CD4-positive, alpha-beta T cell (primary cell): ENCODE measurements at regions of chr6 and their contacts with region 1.

Region 1: DNA sequence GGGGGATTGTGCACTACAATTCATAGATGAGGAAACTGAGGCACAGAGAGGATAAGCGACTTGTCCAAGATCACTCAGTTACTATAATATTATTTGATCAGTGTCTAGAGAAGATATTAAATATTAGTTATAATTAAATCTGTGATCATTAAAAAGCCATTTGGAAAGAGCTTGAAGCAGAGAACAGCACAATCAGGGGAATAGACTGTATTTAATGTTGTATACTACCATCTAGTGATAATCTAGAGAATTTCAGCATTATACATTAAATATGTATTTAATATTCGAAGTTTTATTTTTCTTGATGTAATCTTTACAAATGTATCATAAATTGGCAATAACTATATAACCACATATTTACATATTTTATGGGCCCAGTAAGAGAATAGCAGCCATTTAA is 20.1 kb upstream of the MTCL3 start:
- DNase-seq: peak in 3 of 14 experiments; percentile 25 to 31 (median 28)
- ATAC-seq: peak; percentile 55
- H3K4me3 ChIP-seq: no peak overlapping the region
- H3K4me3 Mint-ChIP-seq: no peak overlapping the region
- H3K27ac ChIP-seq: no peak overlapping the region
- H3K27ac Mint-ChIP-seq: no peak overlapping the region
- H3K4me1 ChIP-seq: no peaks in the 10 kb centered on the region
- H3K4me1 Mint-ChIP-seq: no peaks in the 10 kb centered on the region
- H3K27me3 ChIP-seq: peaks cover 0 to 13% of the 10 kb centered on the region in 2 experiments
- H3K27me3 Mint-ChIP-seq: peaks cover 10% of the 10 kb centered on the region
- CTCF ChIP-seq: peak; percentile 67

Region 2: GRCh38 chr6:125995972-125996580 is 1543.2 kb before region 1 on chr6:
- CTCF ChIA-PET with region 1: no interaction called
- POLR2A ChIA-PET with region 1: no interaction called
- intact Hi-C with region 1: loop called (anchors 2 to 10 kb)
- DNase-seq: peak; percentile 52 to 87 (median 64)
- ATAC-seq: peak; percentile 99
- H3K4me3 ChIP-seq: peak overlapping the region; percentile 28
- H3K4me3 Mint-ChIP-seq: peak overlapping the region; percentile 71
- H3K27ac ChIP-seq: no peak overlapping the region
- H3K27ac Mint-ChIP-seq: no peak overlapping the region
- H3K4me1 ChIP-seq: no peaks in the 10 kb centered on the region
- H3K4me1 Mint-ChIP-seq: peaks cover 32% of the 10 kb centered on the region
- H3K27me3 ChIP-seq: no peaks in the 10 kb centered on the region
- H3K27me3 Mint-ChIP-seq: no peaks in the 10 kb centered on the region
- CTCF ChIP-seq: peak; percentile 99

Region 3: DNA sequence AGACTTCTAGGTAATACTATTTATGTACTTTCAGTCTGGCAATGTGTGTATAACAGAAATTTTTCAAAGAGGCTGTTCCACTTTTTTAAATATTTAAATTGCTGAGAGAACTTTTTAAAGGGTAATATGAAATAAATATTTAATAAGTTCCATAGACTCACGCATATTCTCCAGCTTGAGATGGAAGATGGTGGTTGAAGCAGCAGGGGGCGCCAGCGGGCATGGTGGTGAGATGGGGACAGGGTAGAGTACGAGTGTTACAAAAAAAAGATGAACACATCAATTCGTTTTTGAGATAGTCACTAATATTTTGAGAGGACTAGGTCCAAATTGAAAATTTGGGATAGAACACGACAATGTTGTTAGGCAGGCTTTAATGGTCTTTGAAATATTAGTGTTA is 352.4 kb before region 1 on chr6:
- CTCF ChIA-PET with region 1: no interaction called
- POLR2A ChIA-PET with region 1: no interaction called
- intact Hi-C with region 1: loop called in 1 of 2 experiments (anchors 5 kb)
- DNase-seq: peak; percentile 14 to 55 (median 36)
- ATAC-seq: no peak
- H3K4me3 ChIP-seq: no peak overlapping the region
- H3K4me3 Mint-ChIP-seq: no peak overlapping the region
- H3K27ac ChIP-seq: no peak overlapping the region
- H3K27ac Mint-ChIP-seq: no peak overlapping the region
- H3K4me1 ChIP-seq: no peaks in the 10 kb centered on the region
- H3K4me1 Mint-ChIP-seq: no peaks in the 10 kb centered on the region
- H3K27me3 ChIP-seq: no peaks in the 10 kb centered on the region
- H3K27me3 Mint-ChIP-seq: peaks cover 6% of the 10 kb centered on the region
- CTCF ChIP-seq: peak; percentile 49

Region 4: GRCh38 chr6:127302728-127303660 is 236.3 kb before region 1 on chr6:
- CTCF ChIA-PET with region 1: interaction called, 6 read pairs
- POLR2A ChIA-PET with region 1: no interaction called
- intact Hi-C with region 1: loop called (anchors 2 to 5 kb)
- DNase-seq: peak in 12 of 14 experiments; percentile 2 to 76 (median 38)
- ATAC-seq: peak; percentile 97
- H3K4me3 ChIP-seq: no peak overlapping the region
- H3K4me3 Mint-ChIP-seq: no peak overlapping the region
- H3K27ac ChIP-seq: no peak overlapping the region
- H3K27ac Mint-ChIP-seq: peak overlapping the region; percentile 13
- H3K4me1 ChIP-seq: peaks cover 4% of the 10 kb centered on the region
- H3K4me1 Mint-ChIP-seq: peaks cover 53% of the 10 kb centered on the region
- H3K27me3 ChIP-seq: no peaks in the 10 kb centered on the region
- H3K27me3 Mint-ChIP-seq: no peaks in the 10 kb centered on the region
- CTCF ChIP-seq: peak; percentile 84

Region 5: GRCh38 chr6:127464881-127465459 is 74.3 kb before region 1 on chr6:
- CTCF ChIA-PET with region 1: interaction called, 6 read pairs
- POLR2A ChIA-PET with region 1: no interaction called
- intact Hi-C with region 1: loop called (anchors 1 kb)
- DNase-seq: peak; percentile 29 to 74 (median 52)
- ATAC-seq: no peak
- H3K4me3 ChIP-seq: no peak overlapping the region
- H3K4me3 Mint-ChIP-seq: no peak overlapping the region
- H3K27ac ChIP-seq: no peak overlapping the region
- H3K27ac Mint-ChIP-seq: no peak overlapping the region
- H3K4me1 ChIP-seq: no peaks in the 10 kb centered on the region
- H3K4me1 Mint-ChIP-seq: no peaks in the 10 kb centered on the region
- H3K27me3 ChIP-seq: no peaks in the 10 kb centered on the region
- H3K27me3 Mint-ChIP-seq: no peaks in the 10 kb centered on the region
- CTCF ChIP-seq: peak; percentile 78

Region 6: DNA sequence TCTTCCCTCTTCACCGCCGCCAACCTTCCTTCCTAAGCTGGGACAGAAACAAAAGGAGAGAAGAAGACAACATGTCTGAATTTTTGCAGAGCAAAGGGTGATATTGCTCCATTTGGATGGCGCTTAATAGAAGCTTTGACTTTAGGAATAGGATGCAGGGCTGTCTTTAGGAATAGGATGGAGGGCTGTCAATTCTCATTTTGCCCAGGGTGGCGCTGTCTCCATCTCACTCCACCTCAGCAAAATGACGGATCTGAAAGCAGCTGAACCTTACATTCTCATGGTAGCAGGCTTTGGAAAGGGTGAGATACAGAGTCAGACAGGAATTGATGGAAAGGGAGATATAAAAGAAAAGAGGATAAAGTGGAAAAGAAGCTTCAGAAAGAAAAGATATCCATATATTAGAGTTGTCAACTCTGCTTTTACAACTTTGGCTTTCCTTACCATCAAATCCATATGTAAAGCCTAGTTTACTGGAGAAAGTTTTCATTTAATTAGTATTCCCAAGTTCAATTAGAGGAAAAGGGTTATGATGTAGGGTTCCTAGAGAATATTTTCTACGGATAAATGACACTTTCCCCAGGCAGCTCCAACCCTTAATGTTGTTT is 22.5 kb before region 1 on chr6:
- CTCF ChIA-PET with region 1: interaction called, 18 read pairs
- POLR2A ChIA-PET with region 1: interaction called, 4 read pairs
- intact Hi-C with region 1: no loop called
- DNase-seq: peak in 11 of 14 experiments; percentile 6 to 70 (median 31)
- ATAC-seq: peak; percentile 37
- H3K4me3 ChIP-seq: peak overlapping the region; percentile 80
- H3K4me3 Mint-ChIP-seq: peak overlapping the region; percentile 87
- H3K27ac ChIP-seq: no peak overlapping the region
- H3K27ac Mint-ChIP-seq: peak overlapping the region; percentile 57
- H3K4me1 ChIP-seq: peaks cover 37% of the 10 kb centered on the region
- H3K4me1 Mint-ChIP-seq: peaks cover 38% of the 10 kb centered on the region
- H3K27me3 ChIP-seq: peaks cover 14 to 35% of the 10 kb centered on the region in 2 experiments
- H3K27me3 Mint-ChIP-seq: peaks cover 42% of the 10 kb centered on the region
- CTCF ChIP-seq: peak; percentile 65

Region 7: GRCh38 chr6:127807806-127808517 is 268.7 kb after region 1 on chr6:
- CTCF ChIA-PET with region 1: no interaction called
- POLR2A ChIA-PET with region 1: no interaction called
- intact Hi-C with region 1: no loop called
- DNase-seq: no peak
- ATAC-seq: peak; percentile 64
- H3K4me3 ChIP-seq: no peak overlapping the region
- H3K4me3 Mint-ChIP-seq: peak overlapping the region; percentile 31
- H3K27ac ChIP-seq: no peak overlapping the region
- H3K27ac Mint-ChIP-seq: peak overlapping the region; percentile 83
- H3K4me1 ChIP-seq: peaks cover 4% of the 10 kb centered on the region
- H3K4me1 Mint-ChIP-seq: peaks cover 100% of the 10 kb centered on the region
- H3K27me3 ChIP-seq: no peaks in the 10 kb centered on the region
- H3K27me3 Mint-ChIP-seq: no peaks in the 10 kb centered on the region
- CTCF ChIP-seq: no peak